ENCODE measurements at regions of chr16 and their contacts with region 1.

Region 1: DNA sequence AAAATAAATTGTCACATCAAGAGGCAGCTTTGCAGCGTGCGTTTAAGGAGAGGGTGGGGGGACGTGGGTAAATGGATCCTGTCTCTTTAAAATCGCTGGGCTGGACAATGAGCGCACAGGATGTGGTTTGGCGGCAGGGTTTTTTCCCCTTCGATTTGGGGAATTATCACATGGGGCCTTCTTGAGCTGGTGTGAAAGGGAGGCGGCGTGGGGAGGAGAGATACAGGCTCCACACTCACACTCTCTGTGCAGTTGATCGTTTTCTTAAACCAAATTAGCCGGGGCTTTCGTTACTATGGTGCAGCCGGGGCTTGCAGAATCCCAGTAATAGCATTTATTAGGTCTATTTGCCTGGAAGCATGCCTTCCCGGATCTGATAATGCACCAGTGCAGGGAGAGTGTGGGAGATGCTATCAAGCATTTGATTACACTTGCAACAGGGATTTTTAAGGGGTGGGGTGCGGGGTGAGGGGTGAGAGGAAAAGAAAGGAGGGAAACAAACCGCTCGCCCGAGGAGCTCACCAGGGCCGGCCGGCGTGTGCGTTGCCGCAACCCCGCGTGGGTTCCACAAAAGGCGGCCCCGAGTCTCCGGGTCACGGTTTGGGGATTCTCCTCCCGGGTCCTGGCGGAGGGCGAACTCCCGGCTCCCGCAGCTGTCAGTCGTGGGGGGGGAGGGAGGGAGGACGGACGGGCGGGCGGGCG is 58.9 kb upstream of the GSE1 start:
- DNase-seq: peak; percentile 54 to 86
- H3K4me3 ChIP-seq: peak overlapping the region; percentile 76 to 96
- H3K27ac ChIP-seq: peak overlapping the region; percentile 72 to 89
- H3K4me1 ChIP-seq: peaks cover 0 to 16% of the 10 kb centered on the region in 2 donors
- H3K27me3 ChIP-seq: no peaks in the 10 kb centered on the region
- CTCF ChIP-seq: no peak

Region 2: DNA sequence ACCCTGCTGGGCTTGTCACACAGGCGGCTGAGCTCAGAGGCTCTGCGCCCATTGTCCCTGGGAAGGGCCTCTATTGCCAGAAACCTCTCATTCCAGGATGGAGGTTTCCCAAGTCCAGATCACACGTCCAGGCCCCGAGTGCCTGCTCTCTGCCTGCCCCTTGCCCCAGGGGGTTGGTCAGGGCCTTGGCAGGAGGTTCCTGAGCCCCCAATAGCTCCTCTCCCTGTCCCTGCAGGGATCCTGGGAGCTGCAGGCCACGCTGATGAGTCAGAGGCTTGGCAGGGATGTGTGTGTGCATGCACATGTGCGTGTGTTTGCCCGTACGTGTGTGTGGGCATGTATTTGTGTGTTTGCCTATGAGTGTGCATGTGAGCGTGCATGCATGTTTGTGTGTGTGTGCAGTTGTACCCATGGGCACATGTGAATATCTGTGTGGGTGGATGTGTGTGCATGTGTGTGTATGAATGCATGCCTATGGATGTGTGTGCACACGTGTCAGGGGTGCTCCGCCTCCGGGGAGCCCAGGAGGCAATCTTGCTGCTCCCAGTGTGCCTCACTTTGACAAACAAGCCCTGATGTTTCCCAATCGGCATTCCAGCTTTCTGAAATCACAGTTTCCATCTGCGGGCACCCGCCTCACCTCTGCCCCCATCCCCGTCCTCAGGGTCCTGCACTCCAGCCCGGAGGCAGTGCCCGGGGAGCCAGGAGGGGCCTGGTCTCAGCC is 39.5 kb before region 1 on chr16:
- intact Hi-C with region 1: loop called (anchors 1 kb)
- DNase-seq: peak; percentile 35 to 93
- H3K4me3 ChIP-seq: peak overlapping the region in 1 of 2 donors; percentile 25
- H3K27ac ChIP-seq: peak overlapping the region; percentile 81 to 88
- H3K4me1 ChIP-seq: peaks cover 7 to 26% of the 10 kb centered on the region in 2 donors
- H3K27me3 ChIP-seq: no peaks in the 10 kb centered on the region
- CTCF ChIP-seq: peak in 2 of 3 experiments; percentile 22 to 25

Region 3: DNA sequence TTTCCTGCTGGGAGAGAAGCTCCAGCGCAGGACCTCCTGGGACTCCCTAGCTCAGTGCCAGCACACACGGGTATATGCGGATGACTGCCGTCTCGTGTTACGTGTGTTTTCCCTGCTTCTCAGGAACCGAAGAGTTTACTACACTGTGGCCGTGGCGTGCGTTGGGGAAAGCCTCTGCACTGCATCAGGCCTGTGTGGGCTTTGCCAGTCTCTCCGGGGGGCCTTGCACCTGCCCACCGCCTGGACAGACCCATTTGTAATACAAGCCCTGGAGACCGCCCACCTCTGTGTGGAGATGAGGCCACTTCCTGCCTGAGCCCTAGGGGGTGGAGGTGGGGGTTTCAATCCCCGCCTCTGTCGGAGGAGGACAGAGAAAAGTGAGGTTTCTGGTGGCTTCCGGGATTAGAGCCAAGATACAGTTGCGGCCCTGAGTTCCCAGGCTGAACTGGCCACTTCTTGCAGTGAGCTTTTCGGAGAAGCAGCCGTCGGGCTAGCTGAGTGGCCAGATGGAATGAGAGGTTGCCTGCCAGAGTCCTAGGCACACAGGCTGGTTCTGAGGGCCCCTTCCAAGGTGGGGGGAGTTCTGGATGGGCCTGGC is 15.5 kb after region 1 on chr16:
- intact Hi-C with region 1: loop called (anchors 1 kb)
- DNase-seq: no peak
- H3K4me3 ChIP-seq: no peak overlapping the region
- H3K27ac ChIP-seq: peak overlapping the region in 1 of 2 donors; percentile 27
- H3K4me1 ChIP-seq: peaks cover 9 to 12% of the 10 kb centered on the region in 2 donors
- H3K27me3 ChIP-seq: no peaks in the 10 kb centered on the region
- CTCF ChIP-seq: no peak